Mammary epithelial cell (primary cell): ENCODE measurements at regions of chr10 and their contacts with region 1.

Region 1: GRCh38 chr10:576130-576465 is 113.4 kb downstream of the DIP2C start:
- DNase-seq: peak; percentile 94
- H3K4me3 ChIP-seq: no peak overlapping the region
- H3K27ac ChIP-seq: no peak overlapping the region
- H3K4me1 ChIP-seq: no peaks in the 10 kb centered on the region
- H3K27me3 ChIP-seq: no peaks in the 10 kb centered on the region
- CTCF ChIP-seq: no peak

Region 2: DNA sequence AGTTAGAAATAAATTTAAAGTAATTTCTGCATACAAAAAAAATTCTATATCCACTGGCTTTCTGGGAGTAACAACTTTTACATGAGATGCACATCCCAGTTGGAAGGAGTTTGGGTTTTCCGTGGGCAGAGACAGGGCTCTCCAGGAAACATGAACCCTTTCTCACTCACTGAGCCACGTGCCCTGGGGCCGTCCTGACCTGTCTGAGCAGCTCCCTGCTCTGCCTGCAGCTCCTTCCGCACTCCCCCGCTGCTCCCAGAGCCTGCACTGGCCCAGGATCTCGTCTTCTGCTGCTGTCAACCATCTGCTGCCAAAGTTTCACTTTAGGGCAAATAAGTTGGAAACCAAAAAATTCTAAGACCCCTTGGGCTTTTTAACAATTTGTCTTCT is 55.7 kb before region 1 on chr10:
- CTCF ChIA-PET with region 1: no interaction called
- dilution Hi-C with region 1: no loop called
- in situ Hi-C with region 1: no loop called
- intact Hi-C with region 1: loop called (anchors 5 kb)
- DNase-seq: peak; percentile 83
- H3K4me3 ChIP-seq: no peak overlapping the region
- H3K27ac ChIP-seq: no peak overlapping the region
- H3K4me1 ChIP-seq: no peaks in the 10 kb centered on the region
- H3K27me3 ChIP-seq: no peaks in the 10 kb centered on the region
- CTCF ChIP-seq: no peak

Region 3: DNA sequence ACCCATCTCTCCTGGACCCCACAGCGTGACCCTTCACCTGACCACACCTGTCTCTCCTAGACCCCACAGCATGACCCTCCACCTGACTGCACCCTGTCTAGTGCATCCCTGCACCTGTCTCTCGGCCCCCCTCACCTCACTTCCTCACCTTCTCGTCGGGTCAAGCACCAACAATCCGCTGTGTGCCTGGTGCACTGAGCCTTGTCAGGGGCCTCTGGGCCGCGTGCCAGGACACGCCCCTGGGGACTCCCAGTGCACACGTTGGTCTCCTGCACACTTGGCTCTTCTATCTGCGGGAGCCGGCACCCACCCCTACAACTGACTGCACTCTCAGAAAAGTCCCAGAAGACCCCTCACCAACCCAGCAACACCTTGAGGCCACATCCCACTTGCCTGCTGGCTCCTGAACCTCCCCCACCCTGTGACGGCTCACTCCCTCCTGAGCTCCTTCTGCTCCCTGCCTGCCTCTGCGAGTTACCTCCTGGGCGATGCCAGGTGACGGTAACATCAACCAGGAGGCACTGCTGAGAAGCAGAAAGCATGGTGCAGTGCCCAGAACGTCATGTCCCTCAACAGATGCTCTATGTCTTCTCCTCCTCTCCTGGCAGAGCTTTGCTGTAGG is 34.2 kb before region 1 on chr10:
- CTCF ChIA-PET with region 1: no interaction called
- dilution Hi-C with region 1: no loop called
- in situ Hi-C with region 1: no loop called
- intact Hi-C with region 1: loop called (anchors 5 kb)
- DNase-seq: no peak
- H3K4me3 ChIP-seq: no peak overlapping the region
- H3K27ac ChIP-seq: no peak overlapping the region
- H3K4me1 ChIP-seq: no peaks in the 10 kb centered on the region
- H3K27me3 ChIP-seq: no peaks in the 10 kb centered on the region
- CTCF ChIP-seq: no peak